HEK293 (cell line): ENCODE measurements at regions of chr21 and their contacts with region 1.

Region 1: DNA sequence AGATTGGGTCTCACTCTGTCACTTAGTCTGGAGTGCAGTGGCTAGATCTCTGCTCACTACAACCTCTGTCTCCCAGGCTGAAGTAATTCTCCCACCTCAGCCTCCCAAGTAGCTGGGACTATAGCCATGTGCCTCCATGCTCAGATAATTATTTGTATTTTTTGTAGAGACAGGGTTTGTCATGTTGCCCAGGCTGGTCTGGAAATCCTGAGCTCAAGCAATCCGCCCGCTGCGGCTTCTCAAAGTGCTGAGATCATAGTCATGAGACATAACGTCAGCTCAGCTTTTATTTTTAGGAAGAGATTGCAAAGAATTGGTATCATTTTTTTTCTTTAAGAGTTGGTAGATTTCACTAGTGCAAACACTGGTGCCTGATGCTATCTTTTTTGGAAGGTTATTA is 244.9 kb downstream of the DSCAM start:
- H3K4me3 ChIP-seq: no peak overlapping the region
- H3K27ac ChIP-seq: no peak overlapping the region
- H3K4me1 ChIP-seq: no peaks in the 10 kb centered on the region
- CTCF ChIP-seq: no peak

Region 2: DNA sequence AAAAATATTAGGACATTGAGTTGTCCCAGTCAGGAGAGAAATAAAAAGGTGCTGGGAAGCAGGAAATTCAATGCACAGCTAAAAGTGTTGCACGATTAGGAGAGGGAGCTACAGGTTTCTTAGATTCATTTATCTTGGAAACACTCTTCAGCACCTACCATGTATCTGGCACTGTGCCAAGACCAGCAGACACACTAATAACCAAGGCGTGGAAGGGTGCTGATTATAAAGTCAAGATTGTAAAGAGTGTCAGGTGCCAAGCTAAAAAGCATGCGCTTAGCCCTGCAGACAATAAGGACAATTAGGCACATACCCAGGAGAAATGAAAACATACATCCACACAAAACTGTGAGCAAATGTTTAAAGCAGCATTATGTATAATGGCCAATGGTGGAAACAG is 114.9 kb after region 1 on chr21:
- CTCF ChIA-PET with region 1: interaction called, 10 read pairs
- POLR2A ChIA-PET with region 1: no interaction called
- H3K4me3 ChIP-seq: no peak overlapping the region
- H3K27ac ChIP-seq: no peak overlapping the region
- H3K4me1 ChIP-seq: no peaks in the 10 kb centered on the region
- CTCF ChIP-seq: no peak

Region 3: DNA sequence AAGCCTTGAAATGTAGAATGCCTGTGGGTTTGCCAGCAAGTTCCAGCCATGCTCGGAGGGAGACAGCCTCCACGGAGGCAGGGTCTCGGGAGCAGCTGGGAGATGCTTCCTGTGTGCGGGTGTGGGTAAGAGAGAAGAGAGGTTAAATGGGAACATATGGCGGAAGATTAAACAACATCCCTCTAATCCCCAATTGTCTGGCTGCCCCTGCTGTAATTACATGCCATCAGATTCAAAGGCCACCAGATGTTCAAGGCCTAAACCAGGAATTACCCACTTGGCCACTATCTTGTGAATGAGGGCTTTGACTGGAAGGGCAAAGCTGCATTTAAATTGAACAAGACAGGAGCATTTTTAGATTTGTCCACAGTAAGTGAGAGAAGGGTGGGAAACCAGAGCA is 484.5 kb after region 1 on chr21:
- CTCF ChIA-PET with region 1: no interaction called
- POLR2A ChIA-PET with region 1: no interaction called
- H3K4me3 ChIP-seq: no peak overlapping the region
- H3K27ac ChIP-seq: no peak overlapping the region
- H3K4me1 ChIP-seq: no peaks in the 10 kb centered on the region
- CTCF ChIP-seq: no peak